ENCODE measurements at regions of chr19 and their contacts with region 1.

Region 1: GRCh38 chr19:42325273-42325895 is at the start of gene MEGF8:
- DNase-seq: peak; percentile 95 to 99 (median 98)

Region 2: DNA sequence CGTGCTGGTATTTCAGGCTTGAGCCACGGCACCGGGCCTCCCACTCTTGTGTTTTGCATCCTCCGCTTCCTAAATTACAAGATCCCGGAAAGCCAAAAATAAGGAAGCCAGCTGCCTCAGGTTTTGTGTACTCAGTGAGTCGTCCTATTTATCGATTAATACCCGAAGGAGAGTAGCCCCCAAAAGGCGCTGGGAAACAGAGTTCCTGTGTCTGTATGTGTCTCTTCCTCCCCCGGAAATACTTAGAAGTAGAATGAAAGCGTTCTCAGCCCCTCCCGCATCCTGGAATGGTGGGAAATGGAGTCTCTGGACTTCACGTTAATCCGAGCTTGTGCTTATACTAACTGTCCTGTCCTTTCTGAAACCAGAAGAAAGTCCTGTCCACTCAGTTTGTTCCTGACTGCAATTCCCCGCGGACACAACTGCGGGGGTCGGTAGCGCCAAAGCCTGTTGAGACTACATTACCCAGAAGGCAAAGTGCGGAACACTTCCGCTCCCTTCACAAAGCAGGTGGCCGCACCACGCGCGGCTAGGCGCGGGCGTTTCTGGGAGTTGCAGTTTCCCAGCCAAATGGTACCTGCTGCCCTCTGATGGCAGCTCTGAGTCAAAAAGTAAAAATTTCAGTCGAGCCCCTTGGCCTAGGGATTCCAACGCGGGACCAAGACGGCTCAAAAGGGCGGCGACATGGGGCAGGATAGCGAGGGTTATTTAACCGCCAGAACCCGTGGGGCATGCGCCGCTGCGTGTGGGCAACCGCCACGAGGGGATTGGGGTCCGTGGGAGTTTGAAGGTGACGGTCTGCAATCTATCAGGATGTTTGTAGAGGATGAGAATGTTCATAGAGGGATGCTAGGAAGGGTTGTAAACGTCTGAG is 80.8 kb before region 1 on chr19:
- intact Hi-C with region 1: loop called (anchors 10 kb)
- DNase-seq: peak; percentile 88 to 98 (median 95)

Measured in head of caudate nucleus (tissue), 42 donors.